ENCODE measurements at regions of chr3 and their contacts with region 1.

Region 1: GRCh38 chr3:27484015-27484844 is at the start of gene SLC4A7:
- DNase-seq: peak; percentile 86
- ATAC-seq: peak; percentile 94
- H3K4me3 ChIP-seq: peak within 1 kb of the TSS; percentile 82 to 96
- H3K27ac ChIP-seq: peak within 1 kb of the TSS; percentile 77
- H3K4me1 ChIP-seq: peaks cover 3 to 23% of the 10 kb centered on the region in 2 experiments; a peak in 3 of 4 replicates
- H3K27me3 ChIP-seq: no peaks in the 10 kb centered on the region
- CTCF ChIP-seq: no peak
- POLR2A ChIP-seq: peak; percentile 82
- RAD21 ChIP-seq: no peak
- total RNA-seq, gene SLC4A7: 37.6 TPM

Region 2: DNA sequence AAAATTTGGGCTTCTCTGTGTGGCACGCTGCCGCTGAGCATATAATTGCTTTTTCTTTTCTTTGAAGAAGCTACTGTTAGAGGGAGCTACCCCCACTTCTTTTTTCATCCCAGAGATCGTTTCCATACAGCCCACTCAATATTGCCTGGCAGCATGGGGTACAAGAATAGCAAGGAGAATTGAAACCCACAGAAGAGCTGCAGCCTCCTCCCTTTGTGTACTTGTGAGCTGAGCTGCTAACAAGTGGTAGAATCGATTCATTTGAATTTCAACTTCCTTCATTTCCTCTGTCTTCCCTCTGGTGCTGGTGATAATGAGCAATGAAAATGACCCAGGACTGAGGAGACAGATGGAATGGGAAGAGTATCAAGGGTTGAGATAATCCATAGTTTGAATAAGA is 796.8 kb before region 1 on chr3:
- CTCF ChIA-PET with region 1: no interaction called
- POLR2A ChIA-PET with region 1: no interaction called
- RAD21 ChIA-PET with region 1: no interaction called
- intact Hi-C with region 1: no loop called
- DNase-seq: no peak
- ATAC-seq: no peak
- H3K4me3 ChIP-seq: no peak overlapping the region
- H3K27ac ChIP-seq: no peak overlapping the region
- H3K4me1 ChIP-seq: no peaks in the 10 kb centered on the region
- H3K27me3 ChIP-seq: no peaks in the 10 kb centered on the region
- CTCF ChIP-seq: no peak
- POLR2A ChIP-seq: no peak
- RAD21 ChIP-seq: no peak

Region 3: DNA sequence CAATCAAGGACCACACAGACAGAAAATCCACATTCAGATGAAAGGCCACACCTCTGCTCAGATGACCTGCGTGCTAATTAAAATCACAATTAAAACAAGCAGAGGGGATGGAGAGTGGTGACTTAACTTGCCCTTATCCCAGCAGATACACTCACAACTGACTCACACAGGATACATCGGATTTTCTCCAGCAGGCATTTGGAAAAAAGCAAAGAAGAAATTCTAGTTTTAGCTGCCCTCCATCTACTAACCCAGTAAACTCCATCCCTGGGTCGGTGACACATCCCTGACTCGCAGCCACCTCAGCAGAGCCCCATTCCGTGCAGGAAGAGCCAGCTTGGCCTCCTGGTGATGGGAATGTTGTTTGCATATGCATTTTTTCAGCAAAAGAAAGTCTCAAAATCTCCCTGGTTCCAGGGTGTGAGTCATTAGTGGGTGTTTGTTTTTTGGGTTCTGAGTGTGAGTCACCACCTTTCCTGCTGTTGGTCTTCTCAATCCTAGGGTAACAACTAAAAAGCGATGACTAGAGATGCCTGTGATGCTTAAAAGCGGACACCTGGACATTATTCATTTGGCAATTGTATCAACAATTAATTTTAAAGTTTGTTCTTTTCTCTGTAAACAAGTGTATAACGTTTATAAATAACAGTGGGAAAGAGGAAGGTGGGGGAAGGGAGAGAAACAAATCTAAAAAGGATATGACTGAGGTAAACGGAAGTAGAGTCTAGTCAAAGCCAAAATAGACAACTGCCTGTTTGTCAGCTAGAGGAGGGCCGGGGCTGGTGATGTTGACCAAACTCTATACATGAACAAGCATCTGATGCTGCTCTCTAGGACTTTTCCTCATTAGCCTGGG is 49.7 kb after region 1 on chr3:
- CTCF ChIA-PET with region 1: no interaction called
- POLR2A ChIA-PET with region 1: interaction called, 3 read pairs
- RAD21 ChIA-PET with region 1: no interaction called
- intact Hi-C with region 1: loop called (anchors 2 kb)
- DNase-seq: peak; percentile 97
- ATAC-seq: peak; percentile 92
- H3K4me3 ChIP-seq: peak overlapping the region; percentile 24 to 44
- H3K27ac ChIP-seq: peak overlapping the region; percentile 97
- H3K4me1 ChIP-seq: peaks cover 36 to 49% of the 10 kb centered on the region in 2 experiments
- H3K27me3 ChIP-seq: no peaks in the 10 kb centered on the region
- CTCF ChIP-seq: peak in 2 of 3 experiments; percentile 54 to 66; a peak in 4 of 6 replicates
- POLR2A ChIP-seq: no peak
- RAD21 ChIP-seq: peak; percentile 50; the same call in 1 of the 2 replicates

Region 4: GRCh38 chr3:27659279-27660021 is 175.2 kb after region 1 on chr3:
- CTCF ChIA-PET with region 1: no interaction called
- POLR2A ChIA-PET with region 1: no interaction called
- RAD21 ChIA-PET with region 1: no interaction called
- intact Hi-C with region 1: loop called (anchors 2 kb)
- DNase-seq: peak; percentile 62
- ATAC-seq: peak; percentile 97
- H3K4me3 ChIP-seq: no peak overlapping the region
- H3K27ac ChIP-seq: no peak overlapping the region
- H3K4me1 ChIP-seq: peaks cover 5% of the 10 kb centered on the region in 2 experiments; a peak in 3 of 4 replicates
- H3K27me3 ChIP-seq: no peaks in the 10 kb centered on the region
- CTCF ChIP-seq: peak; percentile 75 to 92 (median 80)
- POLR2A ChIP-seq: no peak
- RAD21 ChIP-seq: peak; percentile 77